CD14-positive monocyte (primary cell): ENCODE measurements at regions of chr9 and their contacts with region 1.

Region 1: GRCh38 chr9:23015557-23015956 is 568.9 kb downstream of the DMRTA1 start:
- DNase-seq: no peak
- H3K4me3 ChIP-seq: no peak overlapping the region
- H3K4me3 Mint-ChIP-seq: no peak overlapping the region
- H3K27ac ChIP-seq: no peak overlapping the region
- H3K27ac Mint-ChIP-seq: no peak overlapping the region
- H3K4me1 ChIP-seq: no peaks in the 10 kb centered on the region
- H3K4me1 Mint-ChIP-seq: no peaks in the 10 kb centered on the region
- H3K27me3 ChIP-seq: no peaks in the 10 kb centered on the region
- H3K27me3 Mint-ChIP-seq: no peaks in the 10 kb centered on the region
- CTCF ChIP-seq: no peak

Region 2: GRCh38 chr9:22976454-22976853 is 39.1 kb before region 1 on chr9:
- intact Hi-C with region 1: no loop called
- DNase-seq: no peak
- H3K4me3 ChIP-seq: no peak overlapping the region
- H3K4me3 Mint-ChIP-seq: no peak overlapping the region
- H3K27ac ChIP-seq: no peak overlapping the region
- H3K27ac Mint-ChIP-seq: no peak overlapping the region
- H3K4me1 ChIP-seq: no peaks in the 10 kb centered on the region
- H3K4me1 Mint-ChIP-seq: no peaks in the 10 kb centered on the region
- H3K27me3 ChIP-seq: no peaks in the 10 kb centered on the region
- H3K27me3 Mint-ChIP-seq: no peaks in the 10 kb centered on the region
- CTCF ChIP-seq: no peak

Region 3: GRCh38 chr9:23050548-23050947 is 35.0 kb after region 1 on chr9:
- intact Hi-C with region 1: no loop called
- DNase-seq: no peak
- H3K4me3 ChIP-seq: no peak overlapping the region
- H3K4me3 Mint-ChIP-seq: no peak overlapping the region
- H3K27ac ChIP-seq: no peak overlapping the region
- H3K27ac Mint-ChIP-seq: peak overlapping the region in 1 of 7 donors; percentile 72
- H3K4me1 ChIP-seq: no peaks in the 10 kb centered on the region
- H3K4me1 Mint-ChIP-seq: no peaks in the 10 kb centered on the region
- H3K27me3 ChIP-seq: no peaks in the 10 kb centered on the region
- H3K27me3 Mint-ChIP-seq: no peaks in the 10 kb centered on the region
- CTCF ChIP-seq: no peak

Region 4: GRCh38 chr9:23243523-23243922 is 228.0 kb after region 1 on chr9:
- intact Hi-C with region 1: loop called in 1 of 2 experiments (anchors 10 kb)
- DNase-seq: no peak
- H3K4me3 ChIP-seq: no peak overlapping the region
- H3K4me3 Mint-ChIP-seq: no peak overlapping the region
- H3K27ac ChIP-seq: no peak overlapping the region
- H3K27ac Mint-ChIP-seq: no peak overlapping the region
- H3K4me1 ChIP-seq: no peaks in the 10 kb centered on the region
- H3K4me1 Mint-ChIP-seq: no peaks in the 10 kb centered on the region
- H3K27me3 ChIP-seq: no peaks in the 10 kb centered on the region
- H3K27me3 Mint-ChIP-seq: no peaks in the 10 kb centered on the region
- CTCF ChIP-seq: no peak